Esophagus muscularis mucosa (tissue), 4 donors: ENCODE measurements at regions of chr6 and their contacts with region 1.

Region 1: DNA sequence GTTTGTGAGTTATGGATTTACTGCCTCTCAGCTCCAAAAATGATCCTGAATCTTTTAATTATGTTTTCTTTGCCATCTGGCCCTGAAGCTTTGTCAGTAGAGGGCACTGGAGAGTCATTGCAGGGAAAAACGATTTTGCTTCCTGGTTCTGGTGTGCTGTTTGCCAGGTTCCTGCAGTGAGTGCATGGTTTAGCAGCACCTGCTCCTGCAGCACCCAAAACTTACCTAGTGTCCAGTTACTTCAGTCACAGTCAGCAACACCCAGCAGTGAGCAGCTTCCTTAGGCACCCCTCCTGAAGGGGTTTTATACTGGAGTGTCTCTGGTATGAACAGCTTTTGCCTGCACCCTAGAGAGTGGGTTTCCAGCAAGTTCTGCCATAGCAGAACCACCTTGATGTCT is 6.0 kb upstream of the TRIM26 start:
- DNase-seq: no peak
- H3K4me3 ChIP-seq: no peak overlapping the region
- H3K27ac ChIP-seq: no peak overlapping the region
- H3K4me1 ChIP-seq: peaks cover 7 to 15% (median 9%) of the 10 kb centered on the region in 4 donors
- H3K27me3 ChIP-seq: no peaks in the 10 kb centered on the region
- CTCF ChIP-seq: peak; percentile 72 to 87 (median 73)
- EP300 ChIP-seq: no peak
- POLR2A ChIP-seq: no peak

Region 2: GRCh38 chr6:30184417-30185031 is 34.7 kb before region 1 on chr6:
- intact Hi-C with region 1: no loop called
- DNase-seq: peak; percentile 88
- H3K4me3 ChIP-seq: no peak overlapping the region
- H3K27ac ChIP-seq: no peak overlapping the region
- H3K4me1 ChIP-seq: no peaks in the 10 kb centered on the region
- H3K27me3 ChIP-seq: peaks cover 0 to 4% (median 0%) of the 10 kb centered on the region in 4 donors
- CTCF ChIP-seq: no peak
- EP300 ChIP-seq: no peak
- POLR2A ChIP-seq: no peak

Region 3: DNA sequence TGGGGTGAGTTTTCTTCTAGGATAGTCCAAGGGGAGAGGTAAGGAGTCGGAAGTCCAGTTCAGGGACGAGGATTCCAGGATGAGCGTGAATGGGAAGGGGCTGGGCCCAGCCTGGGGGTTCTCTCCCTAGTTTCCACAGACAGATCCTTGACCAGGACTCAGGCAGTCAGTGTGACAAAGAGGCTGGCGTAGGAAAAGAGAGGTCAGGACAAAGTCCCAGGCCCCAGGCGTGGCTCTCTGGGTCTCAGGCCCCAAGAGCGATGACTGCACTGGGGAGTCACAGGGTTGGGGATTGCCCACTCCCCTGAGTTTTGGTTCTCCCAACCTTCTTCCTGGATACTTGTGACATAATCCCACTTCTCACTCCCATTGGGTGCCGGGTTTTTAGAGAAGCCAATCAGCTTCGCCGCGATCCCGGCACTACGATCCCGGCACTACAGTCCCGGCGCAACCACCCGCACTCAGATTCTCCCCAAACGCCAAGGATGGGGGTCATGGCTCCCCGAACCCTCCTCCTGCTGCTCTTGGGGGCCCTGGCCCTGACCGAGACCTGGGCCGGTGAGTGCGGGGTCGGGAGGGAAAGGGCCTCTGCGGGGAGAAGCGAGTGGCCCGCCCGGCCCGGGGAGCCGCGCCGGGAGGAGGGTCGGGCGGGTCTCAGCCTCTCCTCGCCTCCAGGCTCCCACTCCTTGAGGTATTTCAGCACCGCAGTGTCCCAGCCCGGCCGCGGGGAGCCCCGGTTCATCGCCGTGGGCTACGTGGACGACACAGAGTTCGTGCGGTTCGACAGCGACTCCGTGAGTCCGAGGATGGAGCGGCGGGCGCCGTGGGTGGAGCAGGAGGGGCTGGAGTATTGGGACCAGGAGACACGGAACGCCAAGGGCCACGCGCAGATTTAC is 40.1 kb after region 1 on chr6:
- intact Hi-C with region 1: loop called (anchors 5 kb)
- DNase-seq: peak; percentile 94
- H3K4me3 ChIP-seq: peak overlapping the region; percentile 72 to 98 (median 84)
- H3K27ac ChIP-seq: peak overlapping the region; percentile 88 to 95 (median 90)
- H3K4me1 ChIP-seq: peaks cover 6 to 18% (median 17%) of the 10 kb centered on the region in 4 donors
- H3K27me3 ChIP-seq: no peaks in the 10 kb centered on the region
- CTCF ChIP-seq: peak; percentile 19 to 53 (median 24)
- EP300 ChIP-seq: no peak
- POLR2A ChIP-seq: no peak

Region 4: GRCh38 chr6:30396833-30397479 is 177.7 kb after region 1 on chr6:
- intact Hi-C with region 1: loop called (anchors 5 kb)
- DNase-seq: peak; percentile 94
- H3K4me3 ChIP-seq: no peak overlapping the region
- H3K27ac ChIP-seq: no peak overlapping the region
- H3K4me1 ChIP-seq: peaks cover 0 to 8% (median 4%) of the 10 kb centered on the region in 4 donors
- H3K27me3 ChIP-seq: peaks cover 0 to 20% (median 0%) of the 10 kb centered on the region in 4 donors
- CTCF ChIP-seq: peak; percentile 79 to 93 (median 81)
- EP300 ChIP-seq: no peak
- POLR2A ChIP-seq: no peak